ENCODE measurements at regions of chr22 and their contacts with region 1.

Region 1: DNA sequence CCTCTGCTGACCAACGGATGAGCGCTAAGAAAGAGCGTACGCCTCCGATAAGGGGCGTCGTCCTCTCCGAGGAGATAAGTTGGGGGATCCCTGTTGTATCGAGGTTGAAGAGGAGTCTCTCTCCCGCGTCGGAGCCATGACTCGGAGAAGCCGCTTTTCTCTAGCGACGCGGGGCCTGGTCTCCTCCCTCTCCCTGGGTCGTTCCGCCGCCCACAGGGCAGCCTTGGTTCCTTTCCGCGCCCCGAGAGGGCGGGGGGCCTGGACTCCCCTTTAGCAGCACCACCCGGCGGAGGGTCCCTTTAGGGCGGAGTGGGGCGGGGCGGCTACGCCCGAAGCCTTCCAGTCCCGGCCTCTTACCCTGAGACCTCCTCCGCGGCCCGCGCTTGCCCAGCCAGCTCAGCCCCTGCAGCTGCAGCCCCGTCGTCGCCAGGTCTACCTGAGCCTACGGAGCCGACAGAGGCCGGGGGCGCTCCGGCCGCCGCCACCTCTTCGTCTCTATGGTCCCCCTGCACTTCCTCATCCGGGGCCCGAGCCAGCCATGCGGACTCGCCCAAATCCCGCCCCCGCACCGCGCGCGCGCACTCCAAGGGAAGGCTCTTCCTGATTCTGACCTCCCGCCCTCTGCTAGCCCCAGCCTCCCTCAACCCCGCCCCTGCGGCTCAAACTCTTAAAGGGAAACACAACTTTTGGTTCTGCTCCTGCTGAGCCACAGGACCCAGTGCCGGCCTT is at the start of gene PRR14L:
- DNase-seq: peak; percentile 98
- H3K4me3 Mint-ChIP-seq: peak within 1 kb of the TSS; percentile 94
- H3K27ac Mint-ChIP-seq: peak within 1 kb of the TSS; percentile 91
- H3K4me1 Mint-ChIP-seq: peaks cover 50% of the 10 kb centered on the region
- H3K27me3 Mint-ChIP-seq: no peaks in the 10 kb centered on the region
- total RNA-seq, gene PRR14L: 54.2 and 58.0 TPM in 2 replicates

Region 2: DNA sequence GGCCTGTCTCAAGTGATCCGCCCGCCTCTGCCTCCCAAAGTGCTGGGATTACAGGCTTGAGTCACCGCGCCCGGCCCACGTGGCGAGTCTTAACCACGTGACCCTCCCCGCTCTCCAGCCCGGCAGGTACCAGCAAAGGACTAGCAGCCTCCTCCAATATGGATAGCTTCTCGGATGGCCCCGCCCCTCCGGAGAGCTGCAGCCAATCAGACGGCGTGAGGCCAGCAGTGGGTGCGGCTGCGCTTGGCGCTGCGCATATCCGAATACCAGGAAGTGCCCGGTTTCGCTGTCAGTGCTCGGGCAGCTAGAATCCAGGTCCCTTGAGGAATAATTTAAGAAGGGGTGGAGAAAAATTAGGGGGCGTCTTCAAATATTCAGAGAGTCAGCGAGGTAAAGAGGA is 73.1 kb before region 1 on chr22:
- intact Hi-C with region 1: loop called (anchors 5 kb)
- DNase-seq: peak; percentile 90
- H3K4me3 Mint-ChIP-seq: peak overlapping the region; percentile 87
- H3K27ac Mint-ChIP-seq: peak overlapping the region; percentile 88
- H3K4me1 Mint-ChIP-seq: peaks cover 11% of the 10 kb centered on the region
- H3K27me3 Mint-ChIP-seq: no peaks in the 10 kb centered on the region

Region 3: DNA sequence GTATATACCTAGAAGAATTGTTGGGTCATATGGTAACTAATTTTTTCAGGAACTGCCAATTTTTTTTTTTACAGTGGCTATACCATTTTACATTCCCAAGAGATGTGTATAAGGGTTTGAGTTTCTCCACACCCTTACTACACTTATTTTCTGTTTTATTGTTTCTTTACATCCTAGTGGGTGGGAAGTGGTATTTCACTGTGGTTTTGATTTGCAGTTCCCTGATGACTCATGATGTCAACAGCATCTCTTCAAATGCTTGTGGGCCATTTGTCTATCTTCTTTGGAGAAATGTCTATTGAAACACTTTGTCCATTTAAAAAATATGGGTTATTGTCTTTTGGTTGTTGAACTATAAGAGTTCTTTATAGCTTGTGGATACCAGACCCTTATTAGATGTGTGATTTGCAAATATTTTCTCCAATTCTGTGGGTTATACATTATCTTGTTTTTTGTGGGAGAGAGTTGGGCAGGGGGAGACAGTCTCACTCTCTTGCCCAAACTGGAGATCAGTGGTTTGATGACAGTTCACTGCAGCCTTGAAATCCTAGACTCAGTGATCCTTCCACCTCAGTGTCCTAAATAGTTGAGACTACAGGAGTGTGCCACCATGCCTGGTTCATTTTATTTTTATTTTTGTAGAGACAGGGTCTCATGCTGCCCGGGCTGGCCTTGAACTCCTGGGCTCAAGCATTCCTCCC is 57.5 kb before region 1 on chr22:
- intact Hi-C with region 1: loop called (anchors 5 kb)
- DNase-seq: peak; percentile 12
- H3K4me3 Mint-ChIP-seq: peak overlapping the region; percentile 16
- H3K27ac Mint-ChIP-seq: peak overlapping the region; percentile 74
- H3K4me1 Mint-ChIP-seq: peaks cover 30% of the 10 kb centered on the region
- H3K27me3 Mint-ChIP-seq: no peaks in the 10 kb centered on the region

Region 4: GRCh38 chr22:31943976-31944699 is 194.3 kb after region 1 on chr22 and contains the start of gene YWHAH:
- intact Hi-C with region 1: loop called (anchors 1 kb)
- DNase-seq: peak; percentile 89
- H3K4me3 Mint-ChIP-seq: peak within 1 kb of the TSS; percentile 88
- H3K27ac Mint-ChIP-seq: peak within 1 kb of the TSS; percentile 91
- H3K4me1 Mint-ChIP-seq: peaks cover 19% of the 10 kb centered on the region
- H3K27me3 Mint-ChIP-seq: no peaks in the 10 kb centered on the region
- total RNA-seq, gene YWHAH: 150 TPM in 2 replicates

Measured in activated T-helper 2 cell treated with anti-CD3 and anti-CD28 coated beads, Interferon-gamma antibody, Interleukin-2, Interleukin-4, amounts not matched to agents 10 μg/mL and 5 μg/mL and 100 μg/mL, durations not matched to agents 14 hours and 24 hours and 36 hours (primary cell).